ENCODE measurements at regions of chr12 and their contacts with region 1.

Region 1: GRCh38 chr12:105382771-105383622 is 52.5 kb downstream of the C12orf75 start:
- DNase-seq: no peak
- ATAC-seq: peak; percentile 65 to 73
- H3K4me3 ChIP-seq: peak overlapping the region; percentile 19 to 47 (median 30)
- H3K27ac ChIP-seq: no peak overlapping the region
- H3K4me1 ChIP-seq: peaks cover 6 to 8% of the 10 kb centered on the region in 2 donors
- H3K27me3 ChIP-seq: no peaks in the 10 kb centered on the region
- CTCF ChIP-seq: peak; percentile 63 to 77 (median 73)
- POLR2A ChIP-seq: no peak

Region 2: GRCh38 chr12:104177663-104178501 is 1205.1 kb before region 1 on chr12:
- in situ Hi-C with region 1: loop called in 2 of 4 experiments (anchors 25 kb)
- intact Hi-C with region 1: no loop called
- DNase-seq: peak; percentile 53 to 75
- ATAC-seq: peak; percentile 81 to 83
- H3K4me3 ChIP-seq: no peak overlapping the region
- H3K27ac ChIP-seq: peak overlapping the region; percentile 66 to 72 (median 69)
- H3K4me1 ChIP-seq: peaks cover 5 to 14% of the 10 kb centered on the region in 2 donors
- H3K27me3 ChIP-seq: no peaks in the 10 kb centered on the region
- CTCF ChIP-seq: no peak
- POLR2A ChIP-seq: no peak

Region 3: DNA sequence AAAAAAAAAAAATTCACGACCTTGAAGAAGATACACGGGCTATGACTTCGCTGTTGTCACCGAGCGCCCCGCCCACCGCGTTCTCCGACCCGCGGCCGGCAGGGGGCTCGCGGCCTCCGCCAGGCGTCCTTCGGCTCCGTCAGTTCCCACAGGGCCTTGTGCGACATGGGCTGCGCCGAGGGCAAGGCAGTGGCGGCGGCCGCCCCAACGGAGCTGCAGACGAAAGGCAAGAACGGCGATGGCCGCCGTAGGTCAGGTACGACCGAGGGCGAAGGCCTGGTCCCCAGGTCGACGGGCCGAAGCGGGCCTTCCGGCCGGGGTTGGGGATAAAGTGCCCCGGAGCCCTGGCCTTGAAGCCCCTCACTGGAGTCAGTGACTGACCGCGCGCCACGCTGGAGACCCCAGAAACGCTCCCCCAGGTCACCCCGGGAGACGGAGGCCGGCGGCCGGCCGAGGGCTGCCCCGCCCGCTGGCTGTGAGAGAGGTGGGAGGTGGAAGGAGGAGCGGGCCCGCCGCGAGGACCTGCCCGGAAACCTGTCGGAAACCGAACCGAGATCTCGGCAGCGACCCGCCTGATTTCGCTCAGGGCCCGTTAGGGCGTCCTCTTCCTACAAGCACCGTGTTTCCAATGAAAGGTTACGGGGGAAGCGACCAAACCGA is 1167.2 kb before region 1 on chr12 and contains the start of gene TXNRD1:
- in situ Hi-C with region 1: loop called in 1 of 4 experiments (anchors 25 kb)
- intact Hi-C with region 1: no loop called
- DNase-seq: peak; percentile 58 to 77
- ATAC-seq: peak; percentile 83 to 95
- H3K4me3 ChIP-seq: peak within 1 kb of the TSS; percentile 67 to 73 (median 70)
- H3K27ac ChIP-seq: peak within 1 kb of the TSS; percentile 57 to 72 (median 64)
- H3K4me1 ChIP-seq: peaks cover 10 to 16% of the 10 kb centered on the region in 2 donors
- H3K27me3 ChIP-seq: no peaks in the 10 kb centered on the region
- CTCF ChIP-seq: peak; percentile 75 to 91 (median 81)
- POLR2A ChIP-seq: no peak
- total RNA-seq, gene TXNRD1: 96.6 to 139 (median 118) TPM

Region 4: DNA sequence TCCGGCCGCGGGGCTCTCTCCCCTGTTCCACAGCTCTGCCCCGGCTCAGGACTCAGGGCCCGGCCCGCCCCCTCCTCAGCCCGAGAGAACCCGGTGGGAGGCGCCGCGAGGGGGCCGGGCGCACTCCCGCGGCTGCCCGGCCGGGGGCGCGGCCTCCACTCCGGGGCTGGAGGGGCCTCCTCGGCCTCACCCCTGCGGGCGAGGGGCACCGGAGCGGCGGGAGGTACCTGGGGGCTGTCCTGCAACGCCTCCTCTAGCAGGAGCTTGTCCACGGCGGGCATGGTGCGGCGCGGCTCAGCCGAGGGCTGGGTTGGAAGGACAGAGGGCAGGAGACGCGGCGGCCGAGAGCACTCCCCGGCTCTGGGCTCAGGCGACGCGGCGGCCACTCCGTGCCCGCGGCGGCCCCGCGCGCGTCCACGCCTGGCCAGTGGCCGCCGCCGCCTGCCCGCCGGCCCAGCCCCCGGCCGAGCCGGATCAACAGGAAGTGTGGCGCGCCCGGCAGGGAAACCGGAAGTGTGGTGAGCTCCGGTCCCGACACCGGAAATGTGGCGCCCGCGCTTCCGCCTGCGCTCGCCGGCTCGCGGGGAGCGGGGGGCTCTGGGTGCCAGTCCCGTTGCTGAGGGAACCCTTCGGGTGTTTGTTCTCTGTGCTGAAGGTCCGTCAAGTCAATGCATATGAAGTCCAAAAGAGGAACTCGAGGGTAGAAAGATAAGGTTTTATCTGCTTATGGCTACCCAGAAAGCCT is 147.1 kb before region 1 on chr12 and contains the start of gene APPL2:
- in situ Hi-C with region 1: no loop called
- intact Hi-C with region 1: loop called (anchors 1 kb)
- DNase-seq: peak; percentile 86 to 89
- ATAC-seq: peak; percentile 84 to 89
- H3K4me3 ChIP-seq: peak within 1 kb of the TSS; percentile 77 to 97 (median 86)
- H3K27ac ChIP-seq: peak within 1 kb of the TSS; percentile 89 to 99 (median 98)
- H3K4me1 ChIP-seq: peaks cover 38 to 43% of the 10 kb centered on the region in 2 donors
- H3K27me3 ChIP-seq: no peaks in the 10 kb centered on the region
- CTCF ChIP-seq: peak in 4 of 5 experiments; percentile 45 to 63 (median 59)
- POLR2A ChIP-seq: peak; percentile 77 to 91
- total RNA-seq, gene APPL2: 12.8 to 24.3 (median 19.8) TPM

Region 5: GRCh38 chr12:105279460-105280056 is 103.4 kb before region 1 on chr12:
- in situ Hi-C with region 1: loop called in 3 of 4 experiments (anchors 5 to 10 kb)
- intact Hi-C with region 1: loop called (anchors 1 kb)
- DNase-seq: peak in 1 of 2 donors; percentile 12
- ATAC-seq: peak; percentile 51 to 55
- H3K4me3 ChIP-seq: no peak overlapping the region
- H3K27ac ChIP-seq: no peak overlapping the region
- H3K4me1 ChIP-seq: no peaks in the 10 kb centered on the region
- H3K27me3 ChIP-seq: no peaks in the 10 kb centered on the region
- CTCF ChIP-seq: peak; percentile 36 to 67 (median 61)
- POLR2A ChIP-seq: no peak

Region 6: DNA sequence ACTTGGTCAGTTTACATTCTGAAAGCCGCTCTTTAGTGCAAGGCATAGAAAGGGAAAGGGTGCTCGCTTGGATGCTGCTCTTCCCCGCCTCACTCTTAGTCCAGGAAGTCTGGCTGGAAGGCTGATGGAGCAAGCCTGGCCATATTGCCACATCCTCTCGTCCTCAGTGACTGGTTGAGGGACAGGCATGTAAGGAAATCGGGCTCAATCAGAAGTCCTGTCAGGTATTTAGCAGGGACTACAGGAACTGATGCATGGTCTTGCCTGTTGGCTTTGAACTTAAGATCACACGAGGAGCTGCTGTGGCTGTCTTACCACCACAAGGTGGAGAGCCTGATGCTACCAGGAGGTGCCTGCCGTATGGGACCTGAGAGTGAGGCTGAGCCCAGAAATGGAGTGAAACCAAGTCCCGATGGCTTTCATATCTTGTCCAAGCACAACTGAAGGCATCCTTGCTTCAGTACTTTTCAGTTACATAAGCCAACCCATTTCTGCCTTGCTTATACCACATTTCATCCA is 63.2 kb before region 1 on chr12:
- in situ Hi-C with region 1: no loop called
- intact Hi-C with region 1: loop called (anchors 5 kb)
- DNase-seq: no peak
- ATAC-seq: no peak
- H3K4me3 ChIP-seq: no peak overlapping the region
- H3K27ac ChIP-seq: no peak overlapping the region
- H3K4me1 ChIP-seq: peaks cover 4 to 17% of the 10 kb centered on the region in 2 donors
- H3K27me3 ChIP-seq: no peaks in the 10 kb centered on the region
- CTCF ChIP-seq: no peak
- POLR2A ChIP-seq: no peak

Region 7: GRCh38 chr12:105504286-105504685 is 121.3 kb after region 1 on chr12:
- in situ Hi-C with region 1: no loop called
- intact Hi-C with region 1: no loop called
- DNase-seq: no peak
- ATAC-seq: no peak
- H3K4me3 ChIP-seq: no peak overlapping the region
- H3K27ac ChIP-seq: no peak overlapping the region
- H3K4me1 ChIP-seq: peaks cover 0 to 4% of the 10 kb centered on the region in 2 donors
- H3K27me3 ChIP-seq: no peaks in the 10 kb centered on the region
- CTCF ChIP-seq: no peak
- POLR2A ChIP-seq: no peak